Activated CD4-positive, alpha-beta T cell treated with anti-CD3 and anti-CD28 coated beads, Interleukin-2, amount 10 ng/mL, durations not matched to agents 7 days and 5 days (primary cell): ENCODE measurements at regions of chr11 and their contacts with region 1.

Region 1: DNA sequence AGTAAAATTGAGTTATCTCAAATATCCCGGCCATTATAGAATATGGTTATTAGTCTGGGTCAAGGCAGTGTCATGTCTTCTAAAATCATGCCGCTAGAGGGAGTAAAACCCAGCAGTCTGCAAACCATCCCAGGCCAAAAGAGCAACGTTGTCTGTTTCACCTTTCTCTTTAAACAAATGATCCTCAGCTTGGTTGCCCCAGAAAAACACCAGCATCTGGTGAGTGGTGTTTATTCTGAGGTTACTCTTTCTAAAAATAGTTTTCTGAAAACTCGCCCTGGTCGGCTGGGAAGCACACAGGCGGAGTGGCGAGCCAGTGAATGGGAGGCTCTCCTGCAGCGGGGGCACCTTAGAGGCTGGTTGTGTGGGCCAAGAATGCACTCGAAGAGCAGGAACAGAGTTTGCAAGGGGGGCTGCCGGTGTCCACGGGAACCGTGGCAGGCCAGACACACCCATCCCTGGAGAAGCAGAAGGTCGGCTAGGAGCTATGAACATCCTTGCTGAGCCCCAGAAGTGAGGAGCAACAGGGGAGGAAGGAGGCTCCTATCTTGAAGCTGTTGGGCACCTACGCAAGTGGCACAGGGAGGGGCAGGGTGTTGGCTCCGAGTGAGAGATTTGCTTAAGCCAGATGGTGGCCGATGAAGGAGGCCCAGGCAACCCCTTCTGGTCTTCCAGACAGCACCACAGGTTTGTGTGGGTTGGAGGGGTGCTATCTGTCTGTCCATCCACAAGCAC is 297.1 kb downstream of the ETS1 start:
- DNase-seq: peak; percentile 86
- H3K4me3 Mint-ChIP-seq: peak overlapping the region; percentile 83
- H3K27ac Mint-ChIP-seq: peak overlapping the region; percentile 94
- H3K4me1 Mint-ChIP-seq: peaks cover 90% of the 10 kb centered on the region
- H3K27me3 Mint-ChIP-seq: peaks cover 2% of the 10 kb centered on the region

Region 2: GRCh38 chr11:128279866-128280265 is 10.4 kb before region 1 on chr11:
- CTCF ChIA-PET with region 1: interaction called, 25 read pairs
- POLR2A ChIA-PET with region 1: no interaction called
- DNase-seq: no peak
- H3K4me3 Mint-ChIP-seq: no peak overlapping the region
- H3K27ac Mint-ChIP-seq: no peak overlapping the region
- H3K4me1 Mint-ChIP-seq: peaks cover 3% of the 10 kb centered on the region
- H3K27me3 Mint-ChIP-seq: peaks cover 9% of the 10 kb centered on the region

Region 3: GRCh38 chr11:128302425-128303186 is 12.3 kb after region 1 on chr11:
- CTCF ChIA-PET with region 1: interaction called, 44 read pairs
- POLR2A ChIA-PET with region 1: interaction called, 3 read pairs
- DNase-seq: peak; percentile 92
- H3K4me3 Mint-ChIP-seq: peak overlapping the region; percentile 82
- H3K27ac Mint-ChIP-seq: peak overlapping the region; percentile 91
- H3K4me1 Mint-ChIP-seq: peaks cover 75% of the 10 kb centered on the region
- H3K27me3 Mint-ChIP-seq: no peaks in the 10 kb centered on the region

Region 4: DNA sequence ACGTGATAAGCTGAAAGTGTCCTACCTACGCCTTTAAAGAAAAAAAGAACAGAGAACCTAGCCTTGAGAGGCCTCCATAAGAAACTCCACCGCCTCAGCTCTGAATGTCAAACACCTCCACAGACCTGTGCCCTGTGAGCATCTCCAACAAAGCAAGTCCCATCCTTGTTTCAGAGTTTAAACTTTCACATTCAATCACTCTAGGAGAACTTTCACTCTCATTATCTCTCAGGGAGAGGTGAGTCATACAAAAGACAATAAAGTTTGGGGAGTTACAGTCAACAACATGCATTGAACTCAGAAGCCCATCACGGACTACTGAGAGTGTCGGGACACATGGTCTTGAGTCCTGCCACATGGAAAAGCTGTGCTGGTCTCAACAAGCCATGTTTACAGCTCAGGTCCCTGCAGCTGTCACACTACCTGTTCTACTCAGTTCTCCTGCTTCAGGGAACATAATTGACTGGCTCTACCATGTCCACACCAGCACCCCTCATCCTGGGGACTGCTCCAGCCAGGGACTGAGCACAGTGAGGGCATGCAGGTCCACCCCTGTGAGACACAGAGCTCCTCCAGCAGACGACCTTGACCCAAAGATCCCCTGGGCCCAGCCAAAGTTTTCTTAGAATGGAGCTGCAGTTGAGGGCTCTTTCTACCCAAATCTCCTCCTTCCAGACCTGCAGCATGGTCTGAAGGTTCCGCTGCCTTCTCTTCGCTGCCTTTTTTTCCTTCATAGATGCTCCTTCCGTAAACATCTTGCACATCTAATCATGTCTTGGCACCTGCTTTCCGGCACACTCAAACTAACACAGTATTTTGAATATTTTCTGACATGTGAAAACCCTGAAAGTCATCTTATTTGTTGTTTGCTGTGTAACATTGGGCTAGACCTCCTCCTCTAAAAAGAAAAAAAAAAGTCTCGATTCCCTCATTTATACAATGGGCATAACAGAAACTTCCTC is 182.1 kb after region 1 on chr11:
- CTCF ChIA-PET with region 1: interaction called, 10 read pairs
- POLR2A ChIA-PET with region 1: interaction called, 10 read pairs
- DNase-seq: peak; percentile 72
- H3K4me3 Mint-ChIP-seq: peak overlapping the region; percentile 70
- H3K27ac Mint-ChIP-seq: peak overlapping the region; percentile 95
- H3K4me1 Mint-ChIP-seq: peaks cover 96% of the 10 kb centered on the region
- H3K27me3 Mint-ChIP-seq: no peaks in the 10 kb centered on the region